ACHN (cell line): ENCODE measurements at regions of chr7 and their contacts with region 1.

Region 1: DNA sequence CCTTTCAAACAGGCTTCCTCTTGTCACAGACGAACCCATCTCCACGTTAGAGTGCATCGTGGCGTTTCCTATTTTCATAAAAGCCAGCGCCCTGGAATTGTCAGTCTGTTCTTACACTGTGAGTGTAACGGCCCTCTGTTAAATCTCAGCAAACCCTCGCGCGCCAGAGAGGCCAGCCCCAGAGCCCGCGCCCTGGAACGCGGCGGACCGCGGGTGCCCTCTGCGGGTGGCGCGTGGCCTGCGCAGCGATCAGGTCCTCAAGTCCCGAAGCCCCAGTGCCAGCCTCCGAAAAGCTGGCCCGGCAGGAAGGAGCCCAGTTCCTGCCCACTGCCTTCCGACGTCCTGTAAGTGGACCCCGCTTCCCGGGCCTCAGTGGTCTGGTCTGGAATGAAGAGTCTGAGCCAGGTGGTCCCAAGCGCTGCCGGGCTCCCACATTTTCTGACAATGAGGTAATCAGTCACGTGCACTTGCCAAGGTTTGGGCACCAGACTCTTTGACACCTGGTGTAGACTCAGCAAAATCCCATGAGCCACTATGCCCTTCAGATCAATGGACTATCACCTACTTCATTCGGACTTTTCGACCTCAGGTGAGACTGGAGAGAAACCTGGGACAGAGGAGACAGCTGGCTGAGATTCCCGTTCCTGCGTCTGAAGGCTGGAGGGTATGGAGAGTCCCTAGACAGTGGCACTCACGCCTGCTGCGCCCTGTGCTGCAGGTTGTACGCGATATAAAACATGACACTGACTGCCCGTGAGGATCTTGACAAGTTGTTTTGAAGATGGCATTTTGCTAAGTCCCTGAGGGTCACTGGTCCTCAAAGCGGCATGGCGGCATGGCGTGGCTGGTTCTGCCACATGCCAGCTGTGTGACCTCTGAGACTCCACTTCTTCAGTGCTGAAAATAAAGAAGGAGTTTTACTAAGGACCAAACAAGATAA is 109.4 kb upstream of the LANCL2 start:
- DNase-seq: peak; percentile 92

Region 2: DNA sequence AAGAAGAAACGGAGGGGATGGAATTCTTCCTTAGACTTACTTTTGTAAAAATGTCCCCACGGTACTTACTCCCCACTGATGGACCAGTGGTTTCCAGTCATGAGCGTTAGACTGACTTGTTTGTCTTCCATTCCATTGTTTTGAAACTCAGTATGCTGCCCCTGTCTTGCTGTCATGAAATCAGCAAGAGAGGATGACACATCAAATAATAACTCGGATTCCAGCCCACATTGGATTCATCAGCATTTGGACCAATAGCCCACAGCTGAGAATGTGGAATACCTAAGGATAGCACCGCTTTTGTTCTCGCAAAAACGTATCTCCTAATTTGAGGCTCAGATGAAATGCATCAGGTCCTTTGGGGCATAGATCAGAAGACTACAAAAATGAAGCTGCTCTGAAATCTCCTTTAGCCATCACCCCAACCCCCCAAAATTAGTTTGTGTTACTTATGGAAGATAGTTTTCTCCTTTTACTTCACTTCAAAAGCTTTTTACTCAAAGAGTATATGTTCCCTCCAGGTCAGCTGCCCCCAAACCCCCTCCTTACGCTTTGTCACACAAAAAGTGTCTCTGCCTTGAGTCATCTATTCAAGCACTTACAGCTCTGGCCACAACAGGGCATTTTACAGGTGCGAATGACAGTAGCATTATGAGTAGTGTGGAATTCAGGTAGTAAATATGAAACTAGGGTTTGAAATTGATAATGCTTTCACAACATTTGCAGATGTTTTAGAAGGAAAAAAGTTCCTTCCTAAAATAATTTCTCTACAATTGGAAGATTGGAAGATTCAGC is 49.3 kb before region 1 on chr7:
- in situ Hi-C with region 1: loop called (anchors 10 kb)
- DNase-seq: no peak

Region 3: DNA sequence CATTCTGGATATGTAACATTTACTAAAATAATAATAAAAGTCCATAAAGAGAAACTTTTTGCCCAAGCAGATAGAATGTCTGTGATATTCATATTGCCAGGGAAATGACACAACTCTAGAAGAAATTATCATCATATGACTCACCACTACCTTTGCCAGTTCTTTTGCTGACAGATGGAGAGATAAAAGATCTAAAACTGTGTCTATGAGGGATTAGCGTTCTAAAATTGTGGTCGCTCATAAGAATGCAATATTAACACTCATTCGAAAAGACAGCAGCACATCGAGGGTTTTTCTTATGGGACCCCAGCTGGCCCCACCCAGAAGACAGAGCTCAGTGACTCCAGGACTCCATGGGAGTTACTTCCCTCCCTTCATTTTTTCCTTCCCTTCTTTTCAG is 92.7 kb after region 1 on chr7:
- in situ Hi-C with region 1: no loop called
- DNase-seq: peak; percentile 14